WTC11 (cell line): ENCODE measurements at regions of chr16 and their contacts with region 1.

Region 1: GRCh38 chr16:71311553-71312158 is 22.5 kb upstream of the CMTR2 start:
- DNase-seq: peak; percentile 62
- ATAC-seq: peak; percentile 85
- H3K4me3 Mint-ChIP-seq: no peak overlapping the region
- H3K27ac Mint-ChIP-seq: no peak overlapping the region
- H3K4me1 Mint-ChIP-seq: peaks cover 9% of the 10 kb centered on the region
- H3K27me3 Mint-ChIP-seq: peaks cover 6% of the 10 kb centered on the region
- CTCF ChIP-seq: peak; percentile 84

Region 2: DNA sequence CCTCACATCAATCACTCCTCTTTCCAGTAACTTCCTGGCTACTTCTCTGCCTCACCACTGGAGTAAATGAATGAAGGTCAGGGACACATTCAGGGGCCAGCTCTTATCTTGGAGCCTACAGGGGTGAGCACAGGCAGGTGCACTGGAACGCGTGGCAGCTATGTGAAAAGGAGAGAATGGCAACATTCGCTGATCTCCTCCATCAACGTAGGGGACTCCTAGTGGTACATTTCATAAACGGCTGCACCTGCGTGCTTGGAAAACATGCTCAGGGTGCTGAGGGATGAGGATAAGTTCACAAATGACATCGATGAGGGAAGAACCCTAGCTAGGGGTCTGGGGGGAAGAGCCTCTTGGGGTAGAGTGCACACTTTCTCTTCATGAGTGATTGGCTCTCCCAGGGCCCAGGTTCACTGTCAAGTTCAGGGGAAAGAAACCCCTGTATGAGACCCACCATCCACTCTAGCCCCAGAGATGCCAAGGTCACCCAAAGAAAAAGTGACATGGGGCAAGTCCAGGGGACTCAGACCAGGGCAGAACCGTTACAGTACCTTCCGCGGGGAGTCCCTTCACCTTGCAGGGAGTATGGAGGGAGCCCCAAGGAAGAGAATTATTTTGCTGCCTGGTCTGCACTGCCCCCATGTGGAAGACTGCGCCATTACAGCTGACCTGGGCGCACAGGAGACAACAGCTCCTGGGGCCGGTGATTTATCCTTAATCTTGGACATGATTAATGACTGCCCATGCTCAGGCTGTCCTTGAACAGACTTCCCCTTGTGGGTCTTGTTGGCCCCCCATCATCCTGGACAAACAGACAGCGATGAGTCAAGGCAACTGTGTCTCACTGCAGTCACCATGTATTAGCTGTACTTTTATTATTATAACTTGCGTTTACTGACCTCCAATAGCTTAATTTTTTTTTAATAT is 540.8 kb before region 1 on chr16:
- CTCF ChIA-PET with region 1: interaction called, 12 read pairs
- POLR2A ChIA-PET with region 1: no interaction called
- DNase-seq: peak; percentile 86
- ATAC-seq: peak; percentile 92
- H3K4me3 Mint-ChIP-seq: no peak overlapping the region
- H3K27ac Mint-ChIP-seq: no peak overlapping the region
- H3K4me1 Mint-ChIP-seq: no peaks in the 10 kb centered on the region
- H3K27me3 Mint-ChIP-seq: no peaks in the 10 kb centered on the region
- CTCF ChIP-seq: peak; percentile 99

Region 3: DNA sequence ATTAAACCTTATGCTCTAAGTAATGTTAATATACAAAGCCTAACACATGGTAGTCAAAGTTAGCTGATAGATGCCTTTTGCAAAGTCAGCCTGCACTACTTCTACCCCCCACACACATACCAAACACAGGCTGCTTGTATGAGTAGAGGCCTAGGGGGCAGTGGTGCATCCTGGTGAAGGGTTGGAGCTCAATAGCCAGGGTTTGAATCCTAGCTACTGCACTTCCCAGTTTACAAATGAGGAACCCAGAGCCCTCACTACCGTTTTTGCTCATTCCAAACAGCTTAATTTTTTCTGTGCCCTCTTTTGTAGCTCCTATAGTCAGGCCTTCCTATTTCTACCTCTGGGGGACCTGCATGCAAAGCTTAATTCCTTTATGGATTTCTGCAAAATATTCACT is 62.3 kb before region 1 on chr16:
- CTCF ChIA-PET with region 1: interaction called, 73 read pairs
- POLR2A ChIA-PET with region 1: no interaction called
- DNase-seq: peak; percentile 34
- ATAC-seq: peak; percentile 93
- H3K4me3 Mint-ChIP-seq: no peak overlapping the region
- H3K27ac Mint-ChIP-seq: no peak overlapping the region
- H3K4me1 Mint-ChIP-seq: peaks cover 23% of the 10 kb centered on the region
- H3K27me3 Mint-ChIP-seq: no peaks in the 10 kb centered on the region
- CTCF ChIP-seq: no peak

Region 4: GRCh38 chr16:71328151-71328550 is 16.5 kb after region 1 on chr16:
- CTCF ChIA-PET with region 1: interaction called, 37 read pairs
- POLR2A ChIA-PET with region 1: no interaction called
- DNase-seq: no peak
- ATAC-seq: no peak
- H3K4me3 Mint-ChIP-seq: no peak overlapping the region
- H3K27ac Mint-ChIP-seq: no peak overlapping the region
- H3K4me1 Mint-ChIP-seq: peaks cover 6% of the 10 kb centered on the region; the same call in 1 of the 2 replicates
- H3K27me3 Mint-ChIP-seq: no peaks in the 10 kb centered on the region
- CTCF ChIP-seq: no peak

Region 5: DNA sequence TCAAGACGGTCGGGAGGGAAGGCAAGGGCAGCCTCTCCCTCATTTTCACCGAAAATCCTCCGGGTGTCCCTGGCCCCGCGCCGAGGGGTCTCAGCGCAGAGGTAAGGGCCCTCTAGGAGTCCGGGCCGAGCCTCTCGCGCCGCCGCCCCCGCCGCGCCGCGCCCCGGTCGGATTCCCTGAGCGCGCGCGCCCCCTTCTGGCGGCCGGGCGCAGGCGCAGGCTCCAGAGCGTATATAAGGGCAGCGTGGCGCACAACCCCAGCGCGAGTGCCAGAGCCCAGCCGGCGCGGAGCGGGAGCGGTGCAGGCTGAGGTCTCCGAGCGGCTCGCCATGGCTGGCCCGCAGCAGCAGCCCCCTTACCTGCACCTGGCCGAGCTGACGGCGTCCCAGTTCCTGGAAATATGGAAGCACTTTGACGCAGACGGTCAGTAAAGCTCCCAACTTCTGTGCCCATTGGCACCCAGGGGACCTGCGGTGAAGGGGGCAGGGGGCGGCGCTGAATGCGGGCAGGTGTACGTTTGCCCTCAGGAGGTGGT is 46.9 kb after region 1 on chr16 and contains the start of gene CALB2:
- CTCF ChIA-PET with region 1: interaction called, 14 read pairs
- POLR2A ChIA-PET with region 1: no interaction called
- DNase-seq: peak; percentile 81
- ATAC-seq: peak; percentile 95
- H3K4me3 Mint-ChIP-seq: peak within 1 kb of the TSS; percentile 69
- H3K27ac Mint-ChIP-seq: no peak within 1 kb of the TSS
- H3K4me1 Mint-ChIP-seq: peaks cover 11% of the 10 kb centered on the region
- H3K27me3 Mint-ChIP-seq: peaks cover 34% of the 10 kb centered on the region
- CTCF ChIP-seq: peak; percentile 93
- total RNA-seq, gene CALB2: 1.6 to 2.6 TPM (median 2.5 TPM) in 3 replicates

Region 6: DNA sequence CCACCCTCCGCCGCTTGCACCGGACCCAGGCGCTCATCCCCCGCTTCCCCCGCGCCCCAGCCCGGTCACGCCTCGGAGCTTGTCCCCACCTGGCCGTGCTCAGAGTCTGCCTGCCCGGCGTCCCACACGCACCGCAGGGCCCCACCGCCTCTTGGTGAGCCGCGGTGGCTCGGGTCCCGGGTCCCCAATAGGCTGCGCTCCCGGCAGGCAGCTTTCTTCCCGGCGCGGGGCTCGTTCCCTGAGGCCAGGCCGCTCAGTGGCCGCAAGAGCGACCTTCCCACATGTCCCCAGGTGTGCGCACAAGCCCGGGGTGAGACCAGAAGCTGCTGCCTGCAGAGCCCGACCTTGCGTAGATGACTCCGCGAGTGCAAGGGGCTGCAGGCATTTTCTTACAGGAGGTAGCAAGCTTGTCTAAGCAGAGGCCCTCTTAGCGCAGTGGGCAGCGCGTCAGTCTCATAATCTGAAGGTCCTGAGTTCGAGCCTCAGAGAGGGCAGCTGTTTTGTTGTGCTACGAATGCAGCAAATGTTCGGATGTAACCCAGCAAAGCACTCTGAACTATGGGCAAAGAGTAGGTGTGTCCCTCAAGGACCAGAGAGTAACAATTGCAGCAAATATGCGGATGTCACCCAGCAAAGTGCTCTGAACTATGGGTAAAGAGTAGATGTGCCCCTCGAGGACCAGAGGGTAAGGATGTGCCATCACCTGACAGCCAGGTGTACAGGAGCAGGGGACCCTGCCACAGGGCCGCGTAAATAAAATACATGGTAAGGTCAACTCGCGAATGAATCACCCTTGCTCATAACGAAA is 114.6 kb after region 1 on chr16:
- CTCF ChIA-PET with region 1: interaction called, 11 read pairs
- POLR2A ChIA-PET with region 1: no interaction called
- DNase-seq: peak; percentile 94
- ATAC-seq: peak; percentile 96
- H3K4me3 Mint-ChIP-seq: peak overlapping the region; percentile 82
- H3K27ac Mint-ChIP-seq: peak overlapping the region; percentile 95
- H3K4me1 Mint-ChIP-seq: peaks cover 16% of the 10 kb centered on the region
- H3K27me3 Mint-ChIP-seq: peaks cover 53% of the 10 kb centered on the region
- CTCF ChIP-seq: no peak

Region 7: GRCh38 chr16:71758293-71758760 is 446.7 kb after region 1 on chr16:
- CTCF ChIA-PET with region 1: no interaction called
- POLR2A ChIA-PET with region 1: no interaction called
- DNase-seq: no peak
- ATAC-seq: no peak
- H3K4me3 Mint-ChIP-seq: no peak overlapping the region
- H3K27ac Mint-ChIP-seq: no peak overlapping the region
- H3K4me1 Mint-ChIP-seq: no peaks in the 10 kb centered on the region
- H3K27me3 Mint-ChIP-seq: no peaks in the 10 kb centered on the region
- CTCF ChIP-seq: no peak